ENCODE measurements at regions of chr10 and their contacts with region 1.

Region 1: DNA sequence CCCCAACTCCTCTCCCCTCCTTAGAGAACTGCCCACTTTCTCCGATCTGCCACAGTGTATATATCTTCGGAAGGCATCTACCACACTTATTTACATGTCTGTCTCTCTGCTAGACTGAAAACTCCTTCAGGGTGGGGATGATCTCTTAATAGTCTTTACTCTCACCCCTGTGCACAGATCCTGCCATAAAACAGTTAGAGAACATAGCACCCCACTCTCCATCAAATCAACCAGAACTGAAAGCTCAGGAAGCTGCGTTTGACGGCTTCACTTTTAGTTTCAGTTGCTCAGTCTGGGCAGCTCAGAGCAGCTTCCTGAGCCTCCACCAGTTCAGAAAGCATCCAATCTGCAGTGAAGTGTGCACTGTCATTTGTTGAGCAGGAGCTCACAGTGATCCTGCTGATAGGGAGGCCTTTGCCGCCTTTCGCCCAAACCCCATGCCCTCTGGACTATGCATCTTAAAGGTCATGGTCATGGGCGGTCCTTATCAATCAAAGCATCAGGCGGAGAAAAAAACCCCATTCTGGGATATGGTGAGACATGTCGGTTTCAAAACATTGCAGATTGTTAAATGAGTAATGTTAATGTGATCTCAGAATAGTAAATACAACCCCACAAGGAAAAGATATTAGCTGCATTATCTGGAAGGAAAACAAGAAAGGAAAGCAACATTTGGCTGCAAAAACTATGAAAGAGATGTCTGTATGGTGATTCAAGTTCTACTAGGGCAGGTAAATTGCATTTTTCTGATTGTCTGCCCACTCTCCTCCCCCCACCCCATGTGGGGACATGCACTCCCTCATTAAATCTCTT is 167.1 kb upstream of the ADO start:
- DNase-seq: peak; percentile 92
- H3K4me3 Mint-ChIP-seq: no peak overlapping the region
- H3K27ac Mint-ChIP-seq: no peak overlapping the region
- H3K4me1 Mint-ChIP-seq: peaks cover 22% of the 10 kb centered on the region
- H3K27me3 Mint-ChIP-seq: no peaks in the 10 kb centered on the region

Region 2: GRCh38 chr10:61943674-61944410 is 693.6 kb before region 1 on chr10:
- intact Hi-C with region 1: loop called (anchors 10 kb)
- DNase-seq: peak; percentile 73
- H3K4me3 Mint-ChIP-seq: peak overlapping the region; percentile 82
- H3K27ac Mint-ChIP-seq: peak overlapping the region; percentile 93
- H3K4me1 Mint-ChIP-seq: peaks cover 49% of the 10 kb centered on the region
- H3K27me3 Mint-ChIP-seq: no peaks in the 10 kb centered on the region

Region 3: GRCh38 chr10:62610649-62611229 is 26.7 kb before region 1 on chr10:
- intact Hi-C with region 1: loop called (anchors 1 kb)
- DNase-seq: peak; percentile 93
- H3K4me3 Mint-ChIP-seq: no peak overlapping the region
- H3K27ac Mint-ChIP-seq: peak overlapping the region; percentile 27
- H3K4me1 Mint-ChIP-seq: peaks cover 46% of the 10 kb centered on the region
- H3K27me3 Mint-ChIP-seq: peaks cover 5% of the 10 kb centered on the region

Region 4: GRCh38 chr10:62655337-62655994 is 18.0 kb after region 1 on chr10:
- intact Hi-C with region 1: loop called (anchors 1 kb)
- DNase-seq: no peak
- H3K4me3 Mint-ChIP-seq: no peak overlapping the region
- H3K27ac Mint-ChIP-seq: peak overlapping the region; percentile 71
- H3K4me1 Mint-ChIP-seq: peaks cover 30% of the 10 kb centered on the region
- H3K27me3 Mint-ChIP-seq: peaks cover 3% of the 10 kb centered on the region

Region 5: DNA sequence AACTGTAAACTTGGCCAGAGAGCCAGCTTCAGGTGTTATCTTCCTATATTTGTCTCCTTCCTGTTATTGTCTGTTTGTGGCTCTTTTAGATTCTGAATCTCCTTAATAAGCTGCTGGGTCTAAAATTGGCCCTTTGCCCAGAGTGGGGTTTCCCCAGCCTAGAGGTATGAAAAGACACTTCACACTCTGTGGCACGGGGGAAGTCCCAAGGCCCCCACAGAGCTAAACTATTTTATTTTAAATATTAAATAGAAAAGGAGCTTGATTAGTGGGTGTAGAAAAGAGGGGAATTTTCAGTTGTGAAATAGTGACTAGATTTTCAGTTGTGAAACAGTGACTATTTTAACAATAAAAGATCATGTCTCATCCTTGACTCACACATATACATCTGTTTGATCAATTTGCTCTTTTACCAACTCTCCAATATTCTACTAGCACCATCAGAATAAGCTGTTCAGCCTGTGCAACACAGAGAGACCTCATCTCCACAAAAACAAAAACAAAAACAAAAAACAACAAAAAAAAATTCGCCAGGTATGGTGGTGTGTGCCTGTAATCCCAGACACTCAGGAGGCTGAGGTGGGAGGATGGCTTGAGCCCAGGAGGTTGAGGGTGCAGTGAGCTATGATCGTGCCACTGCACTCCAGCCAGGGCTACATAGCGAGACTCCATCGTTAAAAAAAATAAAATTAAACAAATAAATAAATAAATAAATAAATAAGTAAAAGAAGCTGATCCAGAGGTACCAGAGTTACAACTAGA is 142.2 kb after region 1 on chr10:
- intact Hi-C with region 1: loop called (anchors 1 kb)
- DNase-seq: peak; percentile 84
- H3K4me3 Mint-ChIP-seq: peak overlapping the region; percentile 42
- H3K27ac Mint-ChIP-seq: peak overlapping the region; percentile 68
- H3K4me1 Mint-ChIP-seq: peaks cover 31% of the 10 kb centered on the region
- H3K27me3 Mint-ChIP-seq: peaks cover 12% of the 10 kb centered on the region

Region 6: GRCh38 chr10:62858364-62858763 is 220.9 kb after region 1 on chr10:
- intact Hi-C with region 1: loop called (anchors 1 kb)
- DNase-seq: no peak
- H3K4me3 Mint-ChIP-seq: no peak overlapping the region
- H3K27ac Mint-ChIP-seq: no peak overlapping the region
- H3K4me1 Mint-ChIP-seq: peaks cover 60% of the 10 kb centered on the region
- H3K27me3 Mint-ChIP-seq: peaks cover 4% of the 10 kb centered on the region

Region 7: GRCh38 chr10:63068246-63068645 is 430.8 kb after region 1 on chr10:
- intact Hi-C with region 1: loop called (anchors 1 kb)
- DNase-seq: peak; percentile 70
- H3K4me3 Mint-ChIP-seq: peak overlapping the region; percentile 49
- H3K27ac Mint-ChIP-seq: peak overlapping the region; percentile 34
- H3K4me1 Mint-ChIP-seq: peaks cover 38% of the 10 kb centered on the region
- H3K27me3 Mint-ChIP-seq: peaks cover 15% of the 10 kb centered on the region